ENCODE measurements at regions of chr15 and their contacts with region 1.

Region 1: GRCh38 chr15:70097337-70098169 is at the start of gene TLE3:
- DNase-seq: peak; percentile 99
- H3K4me3 ChIP-seq: peak within 1 kb of the TSS; percentile 76
- H3K27ac ChIP-seq: peak within 1 kb of the TSS; percentile 97
- H3K4me1 ChIP-seq: peaks cover 48% of the 10 kb centered on the region
- H3K27me3 ChIP-seq: no peaks in the 10 kb centered on the region
- CTCF ChIP-seq: peak; percentile 40; the same call in 1 of the 2 replicates
- total RNA-seq, gene TLE3: 90.4 and 98.1 TPM in 2 replicates

Region 2: GRCh38 chr15:69823218-69823907 is 274.2 kb before region 1 on chr15:
- CTCF ChIA-PET with region 1: no interaction called
- POLR2A ChIA-PET with region 1: no interaction called
- intact Hi-C with region 1: loop called (anchors 10 kb)
- DNase-seq: no peak
- H3K4me3 ChIP-seq: no peak overlapping the region
- H3K27ac ChIP-seq: no peak overlapping the region
- H3K4me1 ChIP-seq: peaks cover 29% of the 10 kb centered on the region
- H3K27me3 ChIP-seq: peaks cover 10% of the 10 kb centered on the region
- CTCF ChIP-seq: no peak

Region 3: GRCh38 chr15:70062321-70062956 is 35.1 kb before region 1 on chr15:
- CTCF ChIA-PET with region 1: no interaction called
- POLR2A ChIA-PET with region 1: no interaction called
- intact Hi-C with region 1: loop called (anchors 2 kb)
- DNase-seq: peak; percentile 94
- H3K4me3 ChIP-seq: peak overlapping the region; percentile 33
- H3K27ac ChIP-seq: peak overlapping the region; percentile 60
- H3K4me1 ChIP-seq: peaks cover 37% of the 10 kb centered on the region
- H3K27me3 ChIP-seq: no peaks in the 10 kb centered on the region
- CTCF ChIP-seq: no peak

Region 4: DNA sequence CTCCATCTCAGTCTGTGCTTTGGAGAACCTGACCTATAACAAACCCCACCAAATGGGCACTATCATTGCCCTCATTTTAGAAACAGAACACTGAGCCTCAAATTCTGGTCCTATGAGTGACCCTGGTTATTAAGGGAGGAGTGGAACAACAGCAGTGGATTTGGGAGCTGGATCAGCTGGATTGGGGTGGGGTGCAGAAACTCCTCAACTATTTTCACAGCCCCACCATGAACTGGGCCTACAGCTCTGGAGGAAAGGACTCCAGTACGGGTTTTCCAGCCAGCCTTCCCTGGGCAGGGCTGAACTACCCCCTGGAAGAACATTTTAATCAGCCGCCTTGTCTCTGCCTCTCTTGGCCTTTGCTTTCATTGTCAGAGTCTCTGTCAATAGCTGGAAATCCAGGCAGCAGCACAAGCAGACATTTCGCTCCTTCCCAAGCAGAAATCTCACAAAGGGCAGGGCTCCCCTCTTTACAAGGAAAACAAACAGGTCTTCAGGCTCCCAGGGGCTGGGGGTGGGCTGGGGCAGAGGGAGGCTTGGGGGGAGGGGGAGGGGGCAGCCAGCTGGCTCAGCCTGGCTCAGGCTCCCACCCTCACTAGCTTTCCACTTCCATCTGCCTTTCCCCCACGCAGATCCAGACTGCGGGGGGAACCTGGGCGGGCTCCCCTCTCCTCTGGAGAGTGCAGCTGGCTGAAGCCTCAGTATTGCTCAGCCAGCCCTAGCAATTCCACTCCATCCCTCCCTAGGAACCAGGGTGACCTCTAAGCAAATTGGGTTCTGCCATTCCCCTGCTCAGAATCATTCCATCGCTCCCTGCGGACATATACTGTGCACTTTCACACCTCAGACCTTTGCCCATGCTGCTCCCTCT is 13.9 kb after region 1 on chr15:
- CTCF ChIA-PET with region 1: interaction called, 3 read pairs
- POLR2A ChIA-PET with region 1: interaction called, 15 read pairs
- intact Hi-C with region 1: loop called (anchors 1 kb)
- DNase-seq: peak; percentile 91
- H3K4me3 ChIP-seq: peak overlapping the region; percentile 26
- H3K27ac ChIP-seq: peak overlapping the region; percentile 80
- H3K4me1 ChIP-seq: peaks cover 13% of the 10 kb centered on the region
- H3K27me3 ChIP-seq: no peaks in the 10 kb centered on the region
- CTCF ChIP-seq: no peak

Region 5: GRCh38 chr15:70289203-70289955 is 191.8 kb after region 1 on chr15:
- CTCF ChIA-PET with region 1: no interaction called
- POLR2A ChIA-PET with region 1: no interaction called
- intact Hi-C with region 1: no loop called
- DNase-seq: no peak
- H3K4me3 ChIP-seq: no peak overlapping the region
- H3K27ac ChIP-seq: no peak overlapping the region
- H3K4me1 ChIP-seq: peaks cover 8% of the 10 kb centered on the region
- H3K27me3 ChIP-seq: no peaks in the 10 kb centered on the region
- CTCF ChIP-seq: no peak

Region 6: GRCh38 chr15:70474471-70475396 is 377.2 kb after region 1 on chr15:
- CTCF ChIA-PET with region 1: no interaction called
- POLR2A ChIA-PET with region 1: no interaction called
- intact Hi-C with region 1: loop called (anchors 10 kb)
- DNase-seq: peak; percentile 89
- H3K4me3 ChIP-seq: peak overlapping the region; percentile 2
- H3K27ac ChIP-seq: peak overlapping the region; percentile 68
- H3K4me1 ChIP-seq: peaks cover 31% of the 10 kb centered on the region
- H3K27me3 ChIP-seq: no peaks in the 10 kb centered on the region
- CTCF ChIP-seq: no peak

Measured in A673 (cell line).